ENCODE measurements at regions of chr11 and their contacts with region 1.

Region 1: DNA sequence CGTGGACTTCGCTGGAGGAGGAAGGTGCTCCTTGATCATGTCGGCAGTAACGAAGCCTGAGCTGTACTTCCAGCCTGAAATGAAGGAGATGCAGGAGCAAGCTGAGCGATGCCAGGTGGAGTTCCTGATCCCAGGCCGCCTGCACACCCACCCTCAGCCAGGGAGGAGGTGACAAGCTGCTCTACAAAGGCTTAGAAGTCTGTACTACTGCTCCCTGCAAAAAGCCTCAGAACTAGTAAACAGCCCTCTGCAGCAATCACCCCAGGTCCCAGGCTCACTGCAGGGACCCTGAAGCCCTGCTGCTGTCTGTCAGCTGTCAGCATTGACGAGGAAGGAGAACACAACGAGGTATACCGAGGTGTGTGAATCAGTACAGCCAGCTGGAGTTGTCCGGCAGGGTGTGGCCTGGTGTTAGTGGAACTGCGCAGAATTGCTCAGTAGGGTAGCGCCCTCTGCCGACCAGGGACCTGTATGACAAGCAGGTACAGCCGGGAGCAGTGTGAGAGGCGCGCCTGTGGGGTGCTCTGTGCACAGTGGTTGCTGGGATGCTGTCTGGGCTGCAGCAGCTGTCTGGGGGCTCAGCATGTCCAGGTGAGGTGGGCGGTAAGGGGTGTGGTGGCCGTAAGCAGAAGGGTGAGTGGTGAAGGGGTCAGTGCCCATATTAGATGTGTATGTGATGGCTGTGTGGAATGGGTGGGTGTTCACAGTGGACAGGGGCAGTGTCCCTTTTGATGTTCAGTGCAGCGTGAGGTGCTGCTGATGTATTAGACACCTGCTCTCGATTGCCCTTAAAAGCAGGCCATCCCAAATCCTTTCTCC is 7.6 kb downstream of the CYB5R2 start:
- DNase-seq: peak; percentile 63
- H3K4me3 Mint-ChIP-seq: no peak overlapping the region
- H3K27ac Mint-ChIP-seq: no peak overlapping the region
- H3K4me1 Mint-ChIP-seq: peaks cover 4% of the 10 kb centered on the region
- H3K27me3 Mint-ChIP-seq: peaks cover 2% of the 10 kb centered on the region

Region 2: GRCh38 chr11:7098235-7098832 is 567.3 kb before region 1 on chr11:
- intact Hi-C with region 1: loop called (anchors 1 kb)
- DNase-seq: no peak
- H3K4me3 Mint-ChIP-seq: no peak overlapping the region
- H3K27ac Mint-ChIP-seq: no peak overlapping the region
- H3K4me1 Mint-ChIP-seq: no peaks in the 10 kb centered on the region
- H3K27me3 Mint-ChIP-seq: peaks cover 16% of the 10 kb centered on the region

Region 3: GRCh38 chr11:7353100-7353499 is 312.6 kb before region 1 on chr11:
- intact Hi-C with region 1: loop called (anchors 2 kb)
- DNase-seq: no peak
- H3K4me3 Mint-ChIP-seq: no peak overlapping the region
- H3K27ac Mint-ChIP-seq: no peak overlapping the region
- H3K4me1 Mint-ChIP-seq: no peaks in the 10 kb centered on the region
- H3K27me3 Mint-ChIP-seq: no peaks in the 10 kb centered on the region

Region 4: GRCh38 chr11:7571640-7572000 is 94.1 kb before region 1 on chr11:
- intact Hi-C with region 1: loop called (anchors 2 kb)
- DNase-seq: no peak
- H3K4me3 Mint-ChIP-seq: no peak overlapping the region
- H3K27ac Mint-ChIP-seq: no peak overlapping the region
- H3K4me1 Mint-ChIP-seq: peaks cover under 1% of the 10 kb centered on the region
- H3K27me3 Mint-ChIP-seq: peaks cover 18% of the 10 kb centered on the region

Region 5: DNA sequence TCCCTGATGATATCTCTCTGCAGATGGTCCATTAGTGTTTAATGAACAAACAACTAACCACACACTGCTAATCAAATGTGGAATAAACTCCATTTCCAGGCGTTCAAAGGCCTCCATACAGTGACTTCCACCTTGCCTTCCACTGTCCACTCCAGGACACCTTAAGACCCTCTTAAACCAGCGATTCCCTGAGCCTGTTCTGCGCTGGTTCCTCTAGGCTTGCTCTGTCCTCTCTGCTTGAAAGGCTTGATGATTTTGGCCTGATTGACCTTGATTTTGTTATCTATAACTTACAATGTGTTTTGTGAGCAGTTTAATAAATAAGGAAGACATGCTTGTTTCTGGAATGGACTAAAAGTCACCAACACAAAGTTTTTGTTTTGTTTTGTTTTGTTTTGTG is 28.6 kb after region 1 on chr11:
- intact Hi-C with region 1: loop called (anchors 1 kb)
- DNase-seq: no peak
- H3K4me3 Mint-ChIP-seq: no peak overlapping the region
- H3K27ac Mint-ChIP-seq: no peak overlapping the region
- H3K4me1 Mint-ChIP-seq: no peaks in the 10 kb centered on the region
- H3K27me3 Mint-ChIP-seq: peaks cover 35% of the 10 kb centered on the region